A549 (cell line): ENCODE measurements at regions of chr6 and their contacts with region 1.

Region 1: DNA sequence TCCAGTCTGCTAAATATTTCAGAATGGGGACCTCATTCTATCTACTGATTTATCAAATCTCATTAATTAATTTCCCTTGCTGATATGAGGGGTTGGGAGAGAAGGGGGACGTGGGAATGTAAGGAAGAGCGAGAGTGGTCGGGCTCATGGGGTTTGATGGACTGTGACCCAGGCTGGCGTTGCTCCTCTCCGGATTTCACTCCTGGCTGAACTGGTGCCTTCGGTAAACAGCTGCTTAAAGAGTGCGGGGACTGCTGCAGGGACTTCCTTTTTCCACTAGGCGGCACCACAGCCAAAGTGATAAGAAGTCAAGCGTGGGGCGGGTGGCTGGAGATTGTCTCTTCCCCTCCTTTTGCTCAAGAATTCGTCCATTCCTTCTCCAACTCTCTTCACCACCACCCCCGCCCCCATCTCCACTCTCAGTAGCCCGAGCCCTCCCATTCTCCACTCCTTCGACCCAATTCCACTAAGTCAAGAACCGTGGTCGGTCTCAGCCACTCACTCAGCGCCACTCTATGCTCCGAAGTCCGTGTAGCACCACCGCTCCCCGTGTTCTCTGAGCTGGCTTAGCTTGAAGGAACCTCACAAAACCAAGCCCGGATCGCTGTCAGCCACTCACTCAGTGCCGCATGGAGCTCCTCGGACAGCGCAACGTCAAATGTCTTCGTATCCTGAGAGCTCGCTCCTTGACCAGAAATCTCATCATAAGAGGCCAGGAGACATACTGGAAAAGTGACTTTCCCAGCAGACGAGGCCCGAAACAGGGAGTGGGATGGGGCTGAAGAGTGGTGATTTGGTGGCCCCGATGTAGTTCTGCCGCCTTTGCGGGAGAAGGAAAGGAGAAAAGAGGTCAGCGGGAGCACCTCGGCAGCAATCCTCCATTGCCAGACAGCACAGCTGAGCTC is 9.7 kb downstream of the TRIM31 start:
- DNase-seq: peak; percentile 83 to 85
- ATAC-seq: peak; percentile 75 to 85
- H3K4me3 ChIP-seq: peak overlapping the region; percentile 38
- H3K27ac ChIP-seq: peak overlapping the region; percentile 66 to 77
- H3K4me1 ChIP-seq: peaks cover 21% of the 10 kb centered on the region
- CTCF ChIP-seq: peak; percentile 79
- EP300 ChIP-seq: no peak
- POLR2A ChIP-seq: no peak
- RAD21 ChIP-seq: peak; percentile 87 to 91

Region 2: DNA sequence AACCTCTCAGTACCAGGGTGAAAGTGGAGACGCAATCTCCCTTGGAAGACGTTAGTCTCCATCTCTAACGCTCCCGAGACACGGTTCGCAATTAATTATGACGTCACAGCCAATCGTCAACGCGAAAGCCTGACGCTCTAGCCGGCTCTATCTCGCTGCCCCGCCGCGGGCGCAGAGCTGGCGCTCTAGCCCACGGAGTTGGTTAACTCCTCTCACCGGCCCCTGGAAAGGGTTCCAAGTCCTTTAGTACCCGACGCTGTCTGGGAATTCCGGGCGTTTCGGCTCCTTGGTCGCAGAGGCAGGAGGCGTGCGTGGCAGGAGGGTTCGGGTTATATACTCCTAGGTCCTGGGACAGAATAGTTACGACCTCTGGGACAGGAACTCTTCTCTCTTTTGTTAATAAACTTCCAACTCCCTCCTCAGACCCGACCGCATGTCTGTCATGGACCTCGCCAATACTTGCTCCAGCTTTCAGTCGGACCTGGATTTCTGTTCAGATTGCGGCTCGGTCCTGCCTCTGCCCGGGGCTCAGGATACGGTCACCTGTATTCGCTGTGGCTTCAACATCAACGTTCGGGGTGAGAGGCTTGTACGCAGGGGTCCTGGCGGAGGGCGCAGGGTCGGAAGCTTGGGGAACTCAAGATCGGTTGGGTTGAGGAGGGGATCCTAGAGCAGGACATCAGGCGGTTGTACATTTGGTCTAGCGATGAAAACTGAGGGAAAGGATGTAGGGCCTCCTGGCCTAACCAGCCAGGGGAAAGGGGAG is 41.9 kb before region 1 on chr6 and contains the start of gene POLR1H:
- CTCF ChIA-PET with region 1: interaction called, 4 read pairs
- POLR2A ChIA-PET with region 1: interaction called, 10 read pairs
- DNase-seq: peak; percentile 87 to 92
- ATAC-seq: peak; percentile 99
- H3K4me3 ChIP-seq: peak within 1 kb of the TSS; percentile 69
- H3K27ac ChIP-seq: peak within 1 kb of the TSS; percentile 78 to 95
- H3K4me1 ChIP-seq: peaks cover 26% of the 10 kb centered on the region
- CTCF ChIP-seq: no peak
- EP300 ChIP-seq: no peak
- POLR2A ChIP-seq: no peak; the same call in 1 of the 2 replicates
- RAD21 ChIP-seq: no peak
- polyA plus RNA-seq, gene POLR1H: 34.6 and 35.3 TPM in 2 replicates

Region 3: GRCh38 chr6:30066577-30067459 is 36.4 kb before region 1 on chr6 and contains the start of gene PPP1R11:
- CTCF ChIA-PET with region 1: interaction called, 5 read pairs
- POLR2A ChIA-PET with region 1: interaction called, 10 read pairs
- DNase-seq: peak; percentile 86 to 98
- ATAC-seq: peak; percentile 98 to 99
- H3K4me3 ChIP-seq: peak within 1 kb of the TSS; percentile 79
- H3K27ac ChIP-seq: peak within 1 kb of the TSS; percentile 91
- H3K4me1 ChIP-seq: peaks cover 27% of the 10 kb centered on the region; the same call in 1 of the 3 replicates
- CTCF ChIP-seq: no peak
- EP300 ChIP-seq: no peak
- POLR2A ChIP-seq: peak; percentile 79
- RAD21 ChIP-seq: no peak
- polyA plus RNA-seq, gene PPP1R11: 61.6 and 78.6 TPM in 2 replicates

Region 4: GRCh38 chr6:30091577-30092381 is 11.4 kb before region 1 on chr6:
- CTCF ChIA-PET with region 1: interaction called, 43 read pairs
- POLR2A ChIA-PET with region 1: interaction called, 3 read pairs
- DNase-seq: peak in 1 of 2 experiments; percentile 48
- ATAC-seq: peak; percentile 53 to 74; a peak in 4 of 6 replicates
- H3K4me3 ChIP-seq: no peak overlapping the region
- H3K27ac ChIP-seq: peak overlapping the region; percentile 13 to 68; a peak in 3 of 6 replicates
- H3K4me1 ChIP-seq: peaks cover 27% of the 10 kb centered on the region
- CTCF ChIP-seq: no peak
- EP300 ChIP-seq: no peak
- POLR2A ChIP-seq: no peak
- RAD21 ChIP-seq: no peak

Region 5: GRCh38 chr6:30143780-30144179 is 40.6 kb after region 1 on chr6:
- CTCF ChIA-PET with region 1: interaction called, 353 read pairs
- POLR2A ChIA-PET with region 1: no interaction called
- DNase-seq: no peak
- ATAC-seq: no peak
- H3K4me3 ChIP-seq: no peak overlapping the region
- H3K27ac ChIP-seq: no peak overlapping the region
- H3K4me1 ChIP-seq: no peaks in the 10 kb centered on the region
- CTCF ChIP-seq: no peak
- EP300 ChIP-seq: no peak
- POLR2A ChIP-seq: no peak
- RAD21 ChIP-seq: no peak

Region 6: GRCh38 chr6:30169658-30170614 is 66.7 kb after region 1 on chr6:
- CTCF ChIA-PET with region 1: interaction called, 22 read pairs
- POLR2A ChIA-PET with region 1: no interaction called
- DNase-seq: peak; percentile 33 to 45
- ATAC-seq: peak; percentile 89 to 97; a peak in 5 of 6 replicates
- H3K4me3 ChIP-seq: no peak overlapping the region
- H3K27ac ChIP-seq: no peak overlapping the region
- H3K4me1 ChIP-seq: no peaks in the 10 kb centered on the region
- CTCF ChIP-seq: peak; percentile 69
- EP300 ChIP-seq: no peak
- POLR2A ChIP-seq: no peak
- RAD21 ChIP-seq: peak; percentile 77 to 81